Activated CD8-positive, alpha-beta T cell treated with anti-CD3 and anti-CD28 coated beads for 36 hours (primary cell): ENCODE measurements at regions of chr1 and their contacts with region 1.

Region 1: GRCh38 chr1:15100121-15100874 is 53.2 kb upstream of the TMEM51 start:
- DNase-seq: peak; percentile 66
- ATAC-seq: peak; percentile 87
- H3K4me3 Mint-ChIP-seq: no peak overlapping the region
- H3K27ac Mint-ChIP-seq: no peak overlapping the region
- H3K4me1 Mint-ChIP-seq: peaks cover 7% of the 10 kb centered on the region
- H3K27me3 Mint-ChIP-seq: peaks cover 28% of the 10 kb centered on the region
- CTCF ChIP-seq: peak; percentile 90

Region 2: GRCh38 chr1:15046487-15047165 is 53.7 kb before region 1 on chr1:
- CTCF ChIA-PET with region 1: no interaction called
- POLR2A ChIA-PET with region 1: no interaction called
- intact Hi-C with region 1: no loop called
- DNase-seq: peak; percentile 70
- ATAC-seq: peak; percentile 80
- H3K4me3 Mint-ChIP-seq: no peak overlapping the region
- H3K27ac Mint-ChIP-seq: no peak overlapping the region
- H3K4me1 Mint-ChIP-seq: no peaks in the 10 kb centered on the region
- H3K27me3 Mint-ChIP-seq: no peaks in the 10 kb centered on the region
- CTCF ChIP-seq: peak; percentile 91

Region 3: DNA sequence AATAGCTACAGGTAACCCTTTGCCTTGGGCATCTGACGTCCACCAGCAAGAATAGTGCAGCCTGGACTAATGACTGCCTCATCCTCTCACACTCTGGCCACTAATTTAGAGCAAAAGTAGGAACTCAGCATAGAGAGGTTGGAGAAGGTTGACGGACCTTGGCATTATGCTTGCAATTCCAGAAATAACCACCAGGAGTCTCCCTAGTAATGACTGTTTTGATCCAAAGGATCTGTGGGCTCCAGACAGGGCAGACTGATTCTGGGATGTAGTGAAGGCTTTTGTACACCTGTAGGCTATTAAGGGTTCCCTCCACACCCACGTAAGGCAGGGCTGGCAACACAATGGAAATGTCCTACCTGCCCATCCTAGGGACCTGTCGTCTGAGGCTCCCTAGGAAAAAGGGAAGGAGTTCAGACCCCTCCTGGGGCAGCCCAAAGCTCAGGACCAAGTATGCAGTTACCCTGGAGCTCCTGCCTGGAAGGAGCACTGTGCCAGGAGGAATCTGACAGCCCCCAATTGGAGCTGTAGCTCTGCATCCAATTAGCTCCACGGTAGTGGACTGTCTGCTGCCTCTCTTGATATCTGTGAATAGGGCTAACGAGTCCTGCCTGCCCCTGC is 37.7 kb before region 1 on chr1:
- CTCF ChIA-PET with region 1: interaction called, 10 read pairs
- POLR2A ChIA-PET with region 1: no interaction called
- intact Hi-C with region 1: no loop called
- DNase-seq: no peak
- ATAC-seq: no peak
- H3K4me3 Mint-ChIP-seq: no peak overlapping the region
- H3K27ac Mint-ChIP-seq: no peak overlapping the region
- H3K4me1 Mint-ChIP-seq: peaks cover 3% of the 10 kb centered on the region
- H3K27me3 Mint-ChIP-seq: no peaks in the 10 kb centered on the region
- CTCF ChIP-seq: peak; percentile 75

Region 4: GRCh38 chr1:15110875-15111230 is 10.6 kb after region 1 on chr1:
- CTCF ChIA-PET with region 1: interaction called, 10 read pairs
- POLR2A ChIA-PET with region 1: no interaction called
- intact Hi-C with region 1: no loop called
- DNase-seq: no peak
- ATAC-seq: no peak
- H3K4me3 Mint-ChIP-seq: no peak overlapping the region
- H3K27ac Mint-ChIP-seq: no peak overlapping the region
- H3K4me1 Mint-ChIP-seq: peaks cover 8% of the 10 kb centered on the region
- H3K27me3 Mint-ChIP-seq: peaks cover 15% of the 10 kb centered on the region
- CTCF ChIP-seq: no peak